Panc1 (cell line): ENCODE measurements at regions of chr15 and their contacts with region 1.

Region 1: GRCh38 chr15:41999290-42000285 is 21.3 kb downstream of the PLA2G4E start:
- DNase-seq: no peak
- ATAC-seq: no peak
- H3K4me3 ChIP-seq: no peak overlapping the region
- H3K27ac ChIP-seq: no peak overlapping the region
- H3K4me1 ChIP-seq: no peaks in the 10 kb centered on the region
- H3K27me3 ChIP-seq: no peaks in the 10 kb centered on the region; the same call in 1 of the 2 replicates
- CTCF ChIP-seq: no peak

Region 2: DNA sequence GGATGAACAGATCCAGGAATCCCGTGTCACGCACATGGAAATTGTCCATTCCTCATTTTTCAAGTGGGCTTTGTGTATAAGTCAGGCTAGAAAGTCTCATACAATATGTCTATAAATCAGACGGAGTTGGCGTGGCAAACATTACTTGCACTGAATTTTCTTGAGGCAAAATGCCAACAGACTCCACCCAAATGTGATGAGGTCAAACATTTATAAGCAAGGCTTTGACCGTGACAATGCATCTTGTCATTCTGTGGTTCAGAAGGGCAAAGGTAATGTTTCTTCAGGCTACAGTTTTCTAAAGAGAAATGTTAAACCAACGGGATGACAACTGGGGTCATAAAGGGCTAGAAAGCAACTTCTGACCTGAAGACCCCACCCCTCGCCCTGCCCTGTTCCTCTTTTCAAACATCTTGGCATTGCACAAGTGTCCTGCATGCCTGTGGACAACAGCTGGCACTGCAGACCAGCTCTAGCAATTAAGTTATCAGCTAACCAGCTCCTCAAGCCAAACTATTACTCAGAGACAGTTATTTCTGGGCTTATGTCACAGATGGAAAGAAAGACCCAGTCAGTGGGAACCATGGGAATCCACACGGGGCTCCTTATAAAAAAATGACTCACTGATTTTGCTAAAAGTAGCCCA is 69.2 kb before region 1 on chr15:
- CTCF ChIA-PET with region 1: no interaction called
- POLR2A ChIA-PET with region 1: no interaction called
- in situ Hi-C with region 1: no loop called
- intact Hi-C with region 1: no loop called
- DNase-seq: peak; percentile 94
- ATAC-seq: peak; percentile 83
- H3K4me3 ChIP-seq: no peak overlapping the region
- H3K27ac ChIP-seq: peak overlapping the region; percentile 94
- H3K4me1 ChIP-seq: peaks cover 84% of the 10 kb centered on the region
- H3K27me3 ChIP-seq: no peaks in the 10 kb centered on the region
- CTCF ChIP-seq: no peak; the same call in 1 of the 2 replicates

Region 3: DNA sequence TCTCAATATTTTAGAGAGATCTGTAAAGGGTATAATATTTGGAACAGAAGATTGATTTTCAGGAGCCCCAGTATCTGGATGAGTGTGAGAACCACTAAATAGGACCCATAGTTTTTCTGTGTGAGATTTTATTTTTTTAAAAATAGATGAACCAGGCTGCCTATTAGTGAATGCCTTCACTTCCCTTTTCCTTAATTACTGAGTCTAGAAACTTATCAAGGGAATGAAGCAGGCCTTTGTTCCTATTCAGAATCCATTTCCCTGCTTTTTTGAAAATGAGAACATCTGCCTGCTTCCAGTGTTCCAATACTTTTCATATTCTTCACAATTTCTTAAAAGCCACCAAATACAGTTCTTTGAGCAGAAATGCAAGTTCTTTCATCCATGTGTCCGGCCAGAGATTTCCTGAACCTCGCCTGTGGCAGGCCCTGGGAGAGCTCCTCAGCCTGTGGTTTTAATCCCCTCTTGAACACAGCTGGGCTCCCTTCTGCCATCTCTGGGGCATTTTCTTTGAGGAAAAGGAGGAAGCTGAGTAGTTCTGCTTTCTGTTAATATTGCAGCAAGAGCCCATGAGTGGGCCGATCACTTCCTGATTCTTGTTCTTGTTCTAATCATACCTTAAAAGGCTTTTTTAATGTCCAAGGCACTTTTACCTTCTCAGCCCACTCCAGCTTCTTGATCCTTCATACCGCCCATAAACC is 31.9 kb before region 1 on chr15:
- CTCF ChIA-PET with region 1: no interaction called
- POLR2A ChIA-PET with region 1: interaction called, 12 read pairs
- in situ Hi-C with region 1: no loop called
- intact Hi-C with region 1: no loop called
- DNase-seq: no peak
- ATAC-seq: no peak
- H3K4me3 ChIP-seq: no peak overlapping the region
- H3K27ac ChIP-seq: no peak overlapping the region
- H3K4me1 ChIP-seq: peaks cover 26% of the 10 kb centered on the region; the same call in 1 of the 2 replicates
- H3K27me3 ChIP-seq: no peaks in the 10 kb centered on the region
- CTCF ChIP-seq: no peak

Region 4: GRCh38 chr15:42050484-42051255 is 51.1 kb after region 1 on chr15:
- CTCF ChIA-PET with region 1: no interaction called
- POLR2A ChIA-PET with region 1: no interaction called
- in situ Hi-C with region 1: loop called (anchors 5 kb)
- intact Hi-C with region 1: no loop called
- DNase-seq: no peak
- ATAC-seq: peak; percentile 23; the same call in 1 of the 2 replicates
- H3K4me3 ChIP-seq: no peak overlapping the region
- H3K27ac ChIP-seq: no peak overlapping the region
- H3K4me1 ChIP-seq: no peaks in the 10 kb centered on the region
- H3K27me3 ChIP-seq: 0 out of 2 replicates have a peak, but pooled peaks cover 2% of the 10 kb centered on the region
- CTCF ChIP-seq: no peak

Region 5: DNA sequence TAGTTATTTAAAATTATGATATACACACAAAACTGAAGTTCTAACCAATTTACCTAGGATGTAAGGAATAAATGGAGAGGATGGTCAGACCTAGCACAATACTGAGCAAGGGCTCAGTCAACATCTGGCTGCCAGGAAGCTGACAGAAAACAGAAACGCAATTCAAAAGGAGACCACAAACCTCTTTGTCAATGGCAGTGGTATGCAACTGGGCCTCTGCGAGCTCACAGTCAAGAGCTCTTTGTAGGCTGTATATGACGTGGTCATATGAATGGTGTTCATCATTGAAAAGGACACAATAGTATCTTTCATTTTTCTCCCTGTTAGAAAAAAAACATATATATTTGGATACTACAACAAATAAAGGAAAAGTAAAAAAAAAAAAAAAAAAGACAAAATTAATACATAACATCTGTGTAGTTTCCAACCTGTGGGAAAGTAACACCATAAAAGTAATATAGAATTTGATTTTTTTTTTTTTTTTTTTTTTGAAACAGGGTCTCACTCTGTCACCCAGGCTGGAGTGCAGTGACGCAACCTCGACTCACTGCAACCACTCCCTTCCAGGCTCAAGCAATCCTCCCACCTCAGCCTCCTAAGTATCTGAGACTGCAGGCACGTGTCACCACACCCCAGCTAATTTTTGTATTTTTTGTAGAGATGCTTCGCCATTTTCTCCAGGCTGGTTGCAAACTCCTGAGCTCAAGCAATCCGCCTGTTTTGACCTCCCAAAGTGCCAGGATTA is 1068.3 kb after region 1 on chr15:
- CTCF ChIA-PET with region 1: no interaction called
- POLR2A ChIA-PET with region 1: no interaction called
- in situ Hi-C with region 1: no loop called
- intact Hi-C with region 1: no loop called
- DNase-seq: no peak
- ATAC-seq: no peak
- H3K4me3 ChIP-seq: no peak overlapping the region
- H3K27ac ChIP-seq: no peak overlapping the region
- H3K4me1 ChIP-seq: no peaks in the 10 kb centered on the region
- H3K27me3 ChIP-seq: no peaks in the 10 kb centered on the region
- CTCF ChIP-seq: no peak